ENCODE measurements at regions of chr1 and their contacts with region 1.

Region 1: GRCh38 chr1:201481761-201482493 is 12.9 kb upstream of the PHLDA3 start:
- DNase-seq: peak; percentile 76
- ATAC-seq: peak; percentile 83
- H3K4me3 ChIP-seq: no peak overlapping the region
- H3K27ac ChIP-seq: peak overlapping the region; percentile 41; the same call in 1 of the 2 replicates
- H3K4me1 ChIP-seq: peaks cover 23 to 29% of the 10 kb centered on the region in 2 experiments
- H3K27me3 ChIP-seq: no peaks in the 10 kb centered on the region
- CTCF ChIP-seq: peak; percentile 88 to 98 (median 89)
- POLR2A ChIP-seq: no peak
- RAD21 ChIP-seq: peak; percentile 99

Region 2: DNA sequence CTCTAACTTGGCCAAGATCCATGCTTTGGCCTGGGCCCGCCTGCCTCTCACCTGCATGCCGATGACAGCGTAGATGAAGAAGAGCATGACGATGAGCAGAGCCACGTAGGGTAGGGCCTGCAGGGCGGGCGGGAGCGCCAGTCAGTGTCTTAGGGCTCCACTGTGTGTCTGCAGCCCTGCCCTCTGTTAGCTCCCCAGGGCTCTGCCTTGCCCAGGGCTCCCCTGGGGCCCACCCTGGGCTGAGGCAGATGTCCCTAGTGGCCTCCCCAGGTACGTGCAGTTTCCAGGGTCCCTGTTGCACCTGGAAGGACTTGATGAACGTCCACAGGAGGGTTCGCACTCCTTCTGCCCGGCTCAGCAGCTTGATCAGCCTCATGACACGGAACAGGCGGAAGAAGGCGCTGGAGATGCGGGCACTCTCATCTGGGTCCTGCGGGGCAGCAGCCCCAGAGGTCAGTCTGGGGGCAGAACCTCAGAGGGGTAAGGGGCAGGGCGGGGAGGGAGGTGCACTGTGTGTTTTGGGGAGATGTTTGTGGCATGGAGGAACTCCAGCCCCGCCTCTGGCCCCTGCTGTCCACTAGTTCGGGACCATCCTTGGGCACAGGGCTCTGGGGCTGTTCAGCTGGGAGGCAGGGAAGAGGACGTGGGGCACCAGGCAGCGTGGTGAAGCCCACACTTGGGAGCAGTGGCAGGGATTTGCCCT is 428.6 kb before region 1 on chr1:
- CTCF ChIA-PET with region 1: no interaction called
- POLR2A ChIA-PET with region 1: no interaction called
- RAD21 ChIA-PET with region 1: no interaction called
- intact Hi-C with region 1: no loop called
- DNase-seq: no peak
- ATAC-seq: peak; percentile 83
- H3K4me3 ChIP-seq: no peak overlapping the region
- H3K27ac ChIP-seq: no peak overlapping the region
- H3K4me1 ChIP-seq: no peaks in the 10 kb centered on the region
- H3K27me3 ChIP-seq: 0 out of 2 replicates have a peak, but pooled peaks cover 5% of the 10 kb centered on the region
- CTCF ChIP-seq: peak in 2 of 3 experiments; percentile 34 to 44; a peak in 4 of 6 replicates
- POLR2A ChIP-seq: no peak
- RAD21 ChIP-seq: no peak

Region 3: GRCh38 chr1:201447911-201448871 is 33.7 kb before region 1 on chr1:
- CTCF ChIA-PET with region 1: interaction called, 44 read pairs
- POLR2A ChIA-PET with region 1: no interaction called
- RAD21 ChIA-PET with region 1: interaction called, 6 to 10 read pairs
- intact Hi-C with region 1: loop called (anchors 1 kb)
- DNase-seq: peak; percentile 57
- ATAC-seq: peak; percentile 100
- H3K4me3 ChIP-seq: no peak overlapping the region
- H3K27ac ChIP-seq: no peak overlapping the region
- H3K4me1 ChIP-seq: peaks cover 7 to 19% of the 10 kb centered on the region in 2 experiments; a peak in 3 of 4 replicates
- H3K27me3 ChIP-seq: no peaks in the 10 kb centered on the region
- CTCF ChIP-seq: peak; percentile 89 to 95 (median 94)
- POLR2A ChIP-seq: no peak
- RAD21 ChIP-seq: peak; percentile 91

Region 4: GRCh38 chr1:201500670-201501120 is 18.8 kb after region 1 on chr1:
- CTCF ChIA-PET with region 1: interaction called, 14 read pairs
- POLR2A ChIA-PET with region 1: interaction called, 8 read pairs
- RAD21 ChIA-PET with region 1: no interaction called
- intact Hi-C with region 1: no loop called
- DNase-seq: no peak
- ATAC-seq: no peak
- H3K4me3 ChIP-seq: no peak overlapping the region
- H3K27ac ChIP-seq: no peak overlapping the region
- H3K4me1 ChIP-seq: peaks cover 0 to 6% of the 10 kb centered on the region in 2 experiments; a peak in 1 of 4 replicates
- H3K27me3 ChIP-seq: no peaks in the 10 kb centered on the region
- CTCF ChIP-seq: no peak
- POLR2A ChIP-seq: no peak
- RAD21 ChIP-seq: no peak

Region 5: GRCh38 chr1:201511941-201512539 is 30.1 kb after region 1 on chr1:
- CTCF ChIA-PET with region 1: interaction called, 194 read pairs
- POLR2A ChIA-PET with region 1: interaction called, 17 read pairs
- RAD21 ChIA-PET with region 1: interaction called, 13 to 23 read pairs
- intact Hi-C with region 1: loop called (anchors 1 kb)
- DNase-seq: no peak
- ATAC-seq: no peak
- H3K4me3 ChIP-seq: no peak overlapping the region
- H3K27ac ChIP-seq: no peak overlapping the region
- H3K4me1 ChIP-seq: peaks cover 13 to 34% of the 10 kb centered on the region in 2 experiments
- H3K27me3 ChIP-seq: no peaks in the 10 kb centered on the region
- CTCF ChIP-seq: no peak
- POLR2A ChIP-seq: no peak
- RAD21 ChIP-seq: no peak

Region 6: GRCh38 chr1:201538612-201539551 is 57.0 kb after region 1 on chr1 and contains the start of gene NAV1:
- CTCF ChIA-PET with region 1: no interaction called
- POLR2A ChIA-PET with region 1: no interaction called
- RAD21 ChIA-PET with region 1: no interaction called
- intact Hi-C with region 1: no loop called
- DNase-seq: no peak
- ATAC-seq: peak; percentile 71
- H3K4me3 ChIP-seq: peak within 1 kb of the TSS; percentile 39 to 56
- H3K27ac ChIP-seq: no peak within 1 kb of the TSS; the same call in 1 of the 2 replicates
- H3K4me1 ChIP-seq: peaks cover 24 to 52% of the 10 kb centered on the region in 2 experiments
- H3K27me3 ChIP-seq: no peaks in the 10 kb centered on the region
- CTCF ChIP-seq: no peak
- POLR2A ChIP-seq: no peak
- RAD21 ChIP-seq: no peak
- total RNA-seq, gene NAV1: 22.8 TPM

Region 7: DNA sequence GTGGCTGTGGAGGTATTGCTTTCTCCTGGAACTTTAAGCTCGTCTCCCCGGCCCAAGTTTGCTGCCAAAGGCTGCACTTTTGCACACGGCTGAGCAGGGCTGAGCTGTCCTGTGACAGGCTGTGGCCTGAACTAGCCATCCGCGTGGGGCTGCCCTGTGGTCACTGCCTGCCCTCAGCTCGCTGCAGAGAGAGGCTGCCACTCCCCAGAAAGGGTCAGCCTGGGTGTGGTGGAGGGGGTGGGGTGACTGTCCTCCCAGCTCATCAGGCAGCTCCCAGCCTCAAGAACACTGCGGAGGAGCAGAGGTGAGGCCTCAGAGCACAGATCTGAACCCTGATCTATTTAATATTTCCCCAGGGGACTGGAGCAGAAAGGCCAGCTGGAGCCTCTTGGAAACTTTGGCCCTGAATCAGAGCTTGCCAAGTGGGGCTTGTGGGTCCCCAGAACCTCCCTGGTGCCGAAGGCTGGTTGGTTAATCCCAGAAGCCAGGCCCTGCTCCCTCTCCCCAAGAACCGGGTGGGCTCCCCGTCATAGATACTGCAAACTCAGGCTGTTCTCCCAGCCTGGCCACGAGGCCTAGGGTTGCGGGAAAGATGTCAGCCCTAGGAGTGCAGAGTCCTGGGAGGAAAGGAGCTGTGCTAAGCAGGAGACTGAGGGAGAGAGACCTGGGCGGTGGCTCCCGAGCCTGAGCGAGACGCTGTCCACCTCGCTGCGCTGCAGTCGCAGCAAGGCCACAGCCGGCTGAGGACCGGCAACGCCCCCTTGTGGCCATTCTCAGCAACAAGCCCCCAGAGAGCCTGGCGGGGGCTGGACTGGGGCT is 221.9 kb after region 1 on chr1:
- CTCF ChIA-PET with region 1: interaction called, 9 read pairs
- POLR2A ChIA-PET with region 1: no interaction called
- RAD21 ChIA-PET with region 1: interaction called in 1 of 2 experiments, 4 read pairs
- intact Hi-C with region 1: loop called (anchors 1 kb)
- DNase-seq: peak; percentile 51
- ATAC-seq: peak; percentile 99
- H3K4me3 ChIP-seq: no peak overlapping the region
- H3K27ac ChIP-seq: no peak overlapping the region
- H3K4me1 ChIP-seq: peaks cover 2 to 4% of the 10 kb centered on the region in 2 experiments; a peak in 1 of 4 replicates
- H3K27me3 ChIP-seq: no peaks in the 10 kb centered on the region
- CTCF ChIP-seq: peak; percentile 93 to 97 (median 96)
- POLR2A ChIP-seq: no peak
- RAD21 ChIP-seq: peak; percentile 99